ENCODE measurements at regions of chr6 and their contacts with region 1.

Region 1: DNA sequence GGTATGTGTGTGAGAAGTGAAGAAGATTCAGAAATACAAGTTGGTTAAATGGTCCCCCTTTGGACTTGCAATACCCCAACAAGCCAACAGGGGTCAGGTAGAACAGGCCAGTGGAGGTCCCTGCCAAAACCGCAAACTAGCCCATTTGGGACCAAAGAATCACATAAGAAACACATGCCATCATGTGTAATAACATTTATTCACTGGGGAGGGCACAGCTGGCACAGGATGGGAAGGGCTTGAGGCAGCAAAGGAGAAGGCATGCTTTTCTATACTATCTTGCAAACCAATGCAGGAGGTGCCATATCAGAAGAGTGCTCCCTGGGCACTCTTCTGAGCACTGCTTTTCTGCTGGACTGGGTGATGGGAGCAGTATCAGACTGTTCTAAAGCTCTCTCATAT is 116.1 kb upstream of the TRAF3IP2 start:
- DNase-seq: peak in 1 of 2 experiments; percentile 84
- H3K4me3 ChIP-seq: no peak overlapping the region
- H3K27ac ChIP-seq: no peak overlapping the region
- H3K4me1 ChIP-seq: no peaks in the 10 kb centered on the region; a peak in 1 of 7 replicates
- H3K27me3 ChIP-seq: no peaks in the 10 kb centered on the region
- CTCF ChIP-seq: peak; percentile 69 to 76 (median 69)
- EP300 ChIP-seq: no peak
- POLR2A ChIP-seq: no peak
- RAD21 ChIP-seq: peak; percentile 78 to 81

Region 2: GRCh38 chr6:111737065-111737521 is 15.3 kb after region 1 on chr6:
- CTCF ChIA-PET with region 1: interaction called, 33 read pairs
- POLR2A ChIA-PET with region 1: no interaction called
- DNase-seq: no peak
- H3K4me3 ChIP-seq: no peak overlapping the region
- H3K27ac ChIP-seq: no peak overlapping the region
- H3K4me1 ChIP-seq: no peaks in the 10 kb centered on the region; a peak in 1 of 7 replicates
- H3K27me3 ChIP-seq: no peaks in the 10 kb centered on the region
- CTCF ChIP-seq: no peak
- EP300 ChIP-seq: no peak
- POLR2A ChIP-seq: no peak
- RAD21 ChIP-seq: no peak

Region 3: GRCh38 chr6:111764238-111765175 is 42.8 kb after region 1 on chr6:
- CTCF ChIA-PET with region 1: interaction called, 20 read pairs
- POLR2A ChIA-PET with region 1: no interaction called
- DNase-seq: no peak
- H3K4me3 ChIP-seq: no peak overlapping the region
- H3K27ac ChIP-seq: no peak overlapping the region
- H3K4me1 ChIP-seq: peaks cover 5 to 24% (median 14%) of the 10 kb centered on the region in 4 experiments
- H3K27me3 ChIP-seq: no peaks in the 10 kb centered on the region
- CTCF ChIP-seq: no peak
- EP300 ChIP-seq: no peak
- POLR2A ChIP-seq: no peak
- RAD21 ChIP-seq: peak; percentile 13 to 15; a peak in 3 of 4 replicates

Region 4: DNA sequence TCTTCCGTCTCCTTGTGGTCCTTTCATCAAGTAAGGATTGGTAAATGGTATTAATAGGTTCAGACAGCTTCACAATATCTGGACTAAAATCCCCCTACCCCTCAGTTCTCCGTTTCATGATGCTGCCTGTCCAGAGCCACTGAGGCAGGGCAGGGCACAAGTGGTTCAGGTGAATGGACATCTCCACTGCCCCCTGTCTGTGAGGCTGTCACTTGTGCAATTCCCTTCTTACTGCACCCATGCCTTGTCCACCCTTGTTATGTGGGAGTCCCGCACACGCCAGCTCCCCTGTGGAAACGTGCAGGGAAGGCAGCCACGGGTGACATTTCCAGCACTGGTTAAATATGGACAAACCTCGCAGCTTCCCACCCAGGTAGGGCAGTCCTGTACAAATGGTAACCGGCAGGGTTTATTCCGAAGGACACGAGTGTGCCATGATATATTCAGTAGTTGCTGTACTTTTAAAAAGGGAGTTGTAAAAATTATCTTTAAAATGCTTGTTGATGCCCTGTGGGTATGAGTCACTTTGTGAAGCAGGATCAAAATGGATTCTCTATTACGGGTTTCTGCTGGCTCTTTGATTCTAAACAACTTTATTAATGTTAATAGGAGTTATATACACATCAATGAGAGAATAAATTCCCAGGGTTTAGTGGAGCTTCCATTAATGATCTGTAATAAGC is 78.0 kb after region 1 on chr6:
- CTCF ChIA-PET with region 1: interaction called, 14 read pairs
- POLR2A ChIA-PET with region 1: no interaction called
- DNase-seq: no peak
- H3K4me3 ChIP-seq: no peak overlapping the region
- H3K27ac ChIP-seq: no peak overlapping the region
- H3K4me1 ChIP-seq: peaks cover 0 to 14% (median 7%) of the 10 kb centered on the region in 4 experiments; a peak in 5 of 7 replicates
- H3K27me3 ChIP-seq: no peaks in the 10 kb centered on the region
- CTCF ChIP-seq: peak in 2 of 3 experiments; percentile 65 to 74; a peak in 3 of 4 replicates
- EP300 ChIP-seq: no peak
- POLR2A ChIP-seq: no peak
- RAD21 ChIP-seq: peak; percentile 33 to 41; a peak in 2 of 4 replicates